ENCODE measurements at regions of chr5 and their contacts with region 1.

Region 1: DNA sequence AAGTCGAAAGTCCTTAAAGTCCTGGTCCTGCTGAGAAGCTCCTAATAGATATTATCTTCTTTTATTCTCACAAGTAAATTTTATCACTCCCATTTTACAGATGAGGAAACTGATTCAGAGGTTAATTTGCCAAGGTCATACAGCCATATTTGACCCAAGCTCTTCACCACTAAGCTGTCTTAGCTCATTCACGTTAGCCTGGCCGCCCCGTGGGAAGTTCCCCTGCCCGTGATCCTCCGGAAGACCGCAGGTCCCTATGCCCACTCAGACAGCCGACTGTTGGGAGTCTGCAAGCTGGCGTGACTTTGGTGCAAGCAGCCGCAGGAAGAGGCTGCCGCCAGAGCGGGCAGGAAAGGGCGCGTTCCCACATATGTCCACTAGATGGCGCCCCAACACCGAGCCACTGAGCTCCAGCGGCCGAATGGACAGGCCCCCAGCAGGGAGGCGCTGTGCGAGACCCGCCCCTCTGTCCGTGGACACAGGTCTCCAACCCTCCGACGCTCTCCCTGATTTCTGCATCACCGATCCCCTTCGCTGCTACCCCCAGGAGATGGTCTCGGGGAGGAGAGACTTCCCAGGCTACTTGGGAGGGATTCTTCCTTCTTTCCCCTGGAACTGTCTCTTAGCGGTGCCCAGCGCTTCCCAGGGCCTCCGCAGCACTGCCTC is 10.0 kb upstream of the ARAP3 start:
- DNase-seq: peak; percentile 66 to 92 (median 84)
- ATAC-seq: peak; percentile 68
- H3K4me3 ChIP-seq: peak overlapping the region; percentile 35
- H3K4me3 Mint-ChIP-seq: peak overlapping the region; percentile 57
- H3K27ac ChIP-seq: no peak overlapping the region
- H3K27ac Mint-ChIP-seq: no peak overlapping the region
- H3K4me1 ChIP-seq: peaks cover 20% of the 10 kb centered on the region
- H3K4me1 Mint-ChIP-seq: peaks cover 23% of the 10 kb centered on the region
- H3K27me3 ChIP-seq: no peaks in the 10 kb centered on the region
- H3K27me3 Mint-ChIP-seq: peaks cover 35% of the 10 kb centered on the region
- CTCF ChIP-seq: peak; percentile 98

Region 2: GRCh38 chr5:141412854-141413539 is 279.0 kb before region 1 on chr5 and contains the start of gene PCDHGA10:
- CTCF ChIA-PET with region 1: no interaction called
- POLR2A ChIA-PET with region 1: no interaction called
- intact Hi-C with region 1: no loop called
- DNase-seq: peak in 13 of 14 experiments; percentile 26 to 72 (median 39)
- ATAC-seq: peak; percentile 88
- H3K4me3 ChIP-seq: peak within 1 kb of the TSS; percentile 53
- H3K4me3 Mint-ChIP-seq: peak within 1 kb of the TSS; percentile 92
- H3K27ac ChIP-seq: no peak within 1 kb of the TSS
- H3K27ac Mint-ChIP-seq: no peak within 1 kb of the TSS
- H3K4me1 ChIP-seq: peaks cover 15% of the 10 kb centered on the region
- H3K4me1 Mint-ChIP-seq: peaks cover 24% of the 10 kb centered on the region
- H3K27me3 ChIP-seq: peaks cover 63 to 84% of the 10 kb centered on the region in 2 experiments
- H3K27me3 Mint-ChIP-seq: peaks cover 82% of the 10 kb centered on the region
- CTCF ChIP-seq: peak; percentile 71
- total RNA-seq, gene PCDHGA10: 0.08 TPM in 1 of 2 experiments, not detected in the other

Region 3: GRCh38 chr5:141681695-141682641 is 10.0 kb before region 1 on chr5 and contains the start of gene ARAP3:
- CTCF ChIA-PET with region 1: interaction called, 17 read pairs
- POLR2A ChIA-PET with region 1: interaction called, 22 read pairs
- intact Hi-C with region 1: no loop called
- DNase-seq: peak in 10 of 14 experiments; percentile 22 to 66 (median 38)
- ATAC-seq: peak; percentile 66
- H3K4me3 ChIP-seq: peak within 1 kb of the TSS; percentile 51
- H3K4me3 Mint-ChIP-seq: peak within 1 kb of the TSS; percentile 62
- H3K27ac ChIP-seq: no peak within 1 kb of the TSS
- H3K27ac Mint-ChIP-seq: no peak within 1 kb of the TSS
- H3K4me1 ChIP-seq: peaks cover 37% of the 10 kb centered on the region
- H3K4me1 Mint-ChIP-seq: peaks cover 29% of the 10 kb centered on the region
- H3K27me3 ChIP-seq: no peaks in the 10 kb centered on the region
- H3K27me3 Mint-ChIP-seq: no peaks in the 10 kb centered on the region
- CTCF ChIP-seq: no peak
- total RNA-seq, gene ARAP3: 0.30 to 0.31 TPM

Region 4: GRCh38 chr5:141811287-141812155 is 119.5 kb after region 1 on chr5:
- CTCF ChIA-PET with region 1: interaction called, 8 read pairs
- POLR2A ChIA-PET with region 1: no interaction called
- intact Hi-C with region 1: loop called in 1 of 2 experiments (anchors 5 kb)
- DNase-seq: peak in 9 of 14 experiments; percentile 1 to 58 (median 13)
- ATAC-seq: peak; percentile 76
- H3K4me3 ChIP-seq: no peak overlapping the region
- H3K4me3 Mint-ChIP-seq: no peak overlapping the region
- H3K27ac ChIP-seq: no peak overlapping the region
- H3K27ac Mint-ChIP-seq: no peak overlapping the region
- H3K4me1 ChIP-seq: no peaks in the 10 kb centered on the region
- H3K4me1 Mint-ChIP-seq: no peaks in the 10 kb centered on the region
- H3K27me3 ChIP-seq: peaks cover 32 to 55% of the 10 kb centered on the region in 2 experiments
- H3K27me3 Mint-ChIP-seq: peaks cover 72% of the 10 kb centered on the region
- CTCF ChIP-seq: peak; percentile 55

Region 5: GRCh38 chr5:142145106-142145900 is 453.3 kb after region 1 on chr5:
- CTCF ChIA-PET with region 1: no interaction called
- POLR2A ChIA-PET with region 1: no interaction called
- intact Hi-C with region 1: loop called (anchors 2 to 10 kb)
- DNase-seq: peak; percentile 28 to 79 (median 52)
- ATAC-seq: peak; percentile 74
- H3K4me3 ChIP-seq: no peak overlapping the region
- H3K4me3 Mint-ChIP-seq: no peak overlapping the region
- H3K27ac ChIP-seq: no peak overlapping the region
- H3K27ac Mint-ChIP-seq: no peak overlapping the region
- H3K4me1 ChIP-seq: no peaks in the 10 kb centered on the region
- H3K4me1 Mint-ChIP-seq: peaks cover 5% of the 10 kb centered on the region
- H3K27me3 ChIP-seq: no peaks in the 10 kb centered on the region
- H3K27me3 Mint-ChIP-seq: no peaks in the 10 kb centered on the region
- CTCF ChIP-seq: peak; percentile 75

Region 6: GRCh38 chr5:142684508-142685041 is 992.6 kb after region 1 on chr5:
- CTCF ChIA-PET with region 1: no interaction called
- POLR2A ChIA-PET with region 1: no interaction called
- intact Hi-C with region 1: no loop called
- DNase-seq: no peak
- ATAC-seq: no peak
- H3K4me3 ChIP-seq: no peak overlapping the region
- H3K4me3 Mint-ChIP-seq: no peak overlapping the region
- H3K27ac ChIP-seq: no peak overlapping the region
- H3K27ac Mint-ChIP-seq: no peak overlapping the region
- H3K4me1 ChIP-seq: no peaks in the 10 kb centered on the region
- H3K4me1 Mint-ChIP-seq: no peaks in the 10 kb centered on the region
- H3K27me3 ChIP-seq: peaks cover 0 to 2% of the 10 kb centered on the region in 2 experiments
- H3K27me3 Mint-ChIP-seq: no peaks in the 10 kb centered on the region
- CTCF ChIP-seq: no peak